ENCODE measurements at regions of chr5 and their contacts with region 1.

Region 1: DNA sequence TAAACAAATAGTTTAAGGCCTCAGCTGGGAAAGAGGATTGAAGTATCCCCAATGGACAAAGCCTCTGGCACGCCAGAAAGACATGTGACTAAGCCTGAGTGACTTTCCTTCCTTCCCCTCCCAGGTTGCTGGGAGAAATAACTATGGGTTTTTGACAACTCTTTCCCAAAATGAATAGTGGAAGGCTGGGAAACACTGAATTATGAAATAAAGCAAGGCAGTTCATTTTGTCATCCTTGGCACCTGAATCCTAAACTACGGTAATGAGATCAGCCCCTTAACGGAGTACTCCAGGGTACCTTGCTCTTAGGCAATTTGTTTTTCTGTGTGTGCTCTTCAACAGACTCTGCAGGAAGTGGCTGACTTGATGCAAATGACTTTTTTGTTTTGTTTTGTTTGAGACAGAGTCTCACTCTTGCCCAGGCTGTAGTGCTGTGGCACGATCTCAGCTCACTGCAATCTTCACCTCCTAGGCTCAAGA is 75.2 kb downstream of the LMNB1 start:
- DNase-seq: peak in 1 of 5 donors; percentile 60
- H3K4me3 ChIP-seq: no peak overlapping the region
- H3K27ac ChIP-seq: no peak overlapping the region
- H3K4me1 ChIP-seq: peaks cover 10% of the 10 kb centered on the region
- H3K27me3 ChIP-seq: no peaks in the 10 kb centered on the region
- CTCF ChIP-seq: no peak
- EP300 ChIP-seq: no peak
- POLR2A ChIP-seq: no peak

Region 2: DNA sequence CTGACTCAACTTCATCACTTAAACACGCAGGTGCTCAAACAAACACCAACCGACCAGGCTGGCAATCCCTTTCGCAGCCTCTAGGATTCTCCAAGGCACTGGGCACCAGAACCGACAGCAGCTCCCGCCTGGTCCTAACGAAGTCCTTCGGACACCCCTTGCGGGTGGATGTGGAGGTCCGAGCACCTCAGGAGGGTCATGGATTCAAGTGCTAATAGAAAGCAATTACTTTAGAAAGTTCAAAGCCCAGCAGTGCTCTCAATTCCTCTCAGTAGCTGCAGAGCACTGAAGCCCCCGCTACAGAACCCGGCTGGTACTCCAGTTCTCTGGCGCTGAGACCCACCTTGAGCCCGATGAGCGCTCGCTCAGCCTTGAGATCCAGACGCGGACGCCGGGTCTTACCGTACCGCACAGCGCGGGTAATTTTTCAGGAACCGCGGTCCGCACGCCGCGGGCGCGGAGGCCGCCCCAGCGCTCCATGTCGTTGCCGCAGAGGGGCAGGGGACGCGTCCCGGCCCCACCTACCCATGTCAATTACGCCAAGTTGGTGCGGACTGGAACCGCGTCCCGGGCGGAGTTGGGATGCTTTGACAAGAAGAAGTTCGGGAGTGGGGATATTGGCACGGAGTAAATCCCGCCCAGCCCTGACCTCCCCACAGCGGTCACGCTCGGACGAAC is 177.6 kb after region 1 on chr5:
- intact Hi-C with region 1: loop called in 1 of 4 experiments (anchors 5 kb)
- DNase-seq: peak; percentile 22 to 56 (median 48)
- H3K4me3 ChIP-seq: peak overlapping the region; percentile 90
- H3K27ac ChIP-seq: peak overlapping the region; percentile 25 to 84
- H3K4me1 ChIP-seq: peaks cover 9% of the 10 kb centered on the region
- H3K27me3 ChIP-seq: no peaks in the 10 kb centered on the region
- CTCF ChIP-seq: peak in 2 of 3 donors; percentile 29
- EP300 ChIP-seq: no peak
- POLR2A ChIP-seq: no peak

Region 3: DNA sequence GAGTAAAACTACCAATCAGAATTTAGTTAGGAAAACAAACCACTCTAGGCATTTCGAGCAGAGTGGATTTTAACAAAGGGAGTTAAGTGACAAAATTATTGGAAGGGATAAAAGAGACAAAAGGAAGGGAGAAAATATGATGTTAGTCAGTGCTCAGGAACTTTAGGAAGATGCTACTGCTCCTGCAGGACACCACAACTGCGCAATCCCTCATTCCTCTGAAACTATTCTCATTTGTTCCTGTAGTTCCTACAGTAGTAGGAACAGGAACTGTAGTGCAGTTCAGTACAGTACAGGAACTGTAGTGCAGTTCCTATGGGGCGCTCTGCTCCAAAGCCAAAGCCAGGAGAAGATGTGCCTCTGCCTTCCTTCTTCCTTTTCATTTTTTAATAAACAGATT is 408.6 kb after region 1 on chr5:
- intact Hi-C with region 1: no loop called
- DNase-seq: no peak
- H3K4me3 ChIP-seq: no peak overlapping the region
- H3K27ac ChIP-seq: no peak overlapping the region
- H3K4me1 ChIP-seq: no peaks in the 10 kb centered on the region
- H3K27me3 ChIP-seq: no peaks in the 10 kb centered on the region
- CTCF ChIP-seq: no peak
- EP300 ChIP-seq: no peak
- POLR2A ChIP-seq: no peak

Measured in ovary (tissue), 10 donors.